Kidney (tissue), 22 donors: ENCODE measurements at regions of chr19 and their contacts with region 1.

Region 1: DNA sequence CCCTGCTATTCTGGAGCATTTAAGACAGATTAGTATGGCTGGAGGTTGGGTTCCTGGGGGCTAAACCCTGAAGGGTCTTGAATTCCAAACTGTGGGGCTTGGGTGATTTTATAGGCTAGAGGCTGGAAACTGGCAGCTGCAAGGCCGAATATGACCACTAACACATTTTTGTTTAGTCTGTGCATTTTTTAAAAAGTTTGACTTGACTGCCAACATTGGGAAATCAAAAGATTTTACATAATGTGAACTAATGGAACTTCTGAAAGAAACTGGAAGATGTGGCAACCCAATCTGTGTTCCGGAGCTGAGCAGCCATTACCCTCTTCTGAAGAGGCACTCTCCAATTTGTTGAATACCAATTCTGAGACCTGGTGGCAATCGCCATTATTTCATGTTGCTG is 5.1 kb downstream of the ZNF784 start:
- DNase-seq: no peak
- H3K4me3 ChIP-seq: no peak overlapping the region
- H3K27ac ChIP-seq: no peak overlapping the region
- H3K4me1 ChIP-seq: peaks cover 2 to 5% (median 3%) of the 10 kb centered on the region in 3 donors
- H3K27me3 ChIP-seq: no peaks in the 10 kb centered on the region
- CTCF ChIP-seq: no peak

Region 2: GRCh38 chr19:55259540-55260210 is 359.6 kb before region 1 on chr19:
- intact Hi-C with region 1: loop called (anchors 10 kb)
- DNase-seq: no peak
- H3K4me3 ChIP-seq: peak overlapping the region; percentile 50 to 70 (median 70)
- H3K27ac ChIP-seq: peak overlapping the region; percentile 66 to 88
- H3K4me1 ChIP-seq: peaks cover 2 to 35% (median 18%) of the 10 kb centered on the region in 3 donors
- H3K27me3 ChIP-seq: no peaks in the 10 kb centered on the region
- CTCF ChIP-seq: no peak